ENCODE measurements at regions of chr5 and their contacts with region 1.

Region 1: DNA sequence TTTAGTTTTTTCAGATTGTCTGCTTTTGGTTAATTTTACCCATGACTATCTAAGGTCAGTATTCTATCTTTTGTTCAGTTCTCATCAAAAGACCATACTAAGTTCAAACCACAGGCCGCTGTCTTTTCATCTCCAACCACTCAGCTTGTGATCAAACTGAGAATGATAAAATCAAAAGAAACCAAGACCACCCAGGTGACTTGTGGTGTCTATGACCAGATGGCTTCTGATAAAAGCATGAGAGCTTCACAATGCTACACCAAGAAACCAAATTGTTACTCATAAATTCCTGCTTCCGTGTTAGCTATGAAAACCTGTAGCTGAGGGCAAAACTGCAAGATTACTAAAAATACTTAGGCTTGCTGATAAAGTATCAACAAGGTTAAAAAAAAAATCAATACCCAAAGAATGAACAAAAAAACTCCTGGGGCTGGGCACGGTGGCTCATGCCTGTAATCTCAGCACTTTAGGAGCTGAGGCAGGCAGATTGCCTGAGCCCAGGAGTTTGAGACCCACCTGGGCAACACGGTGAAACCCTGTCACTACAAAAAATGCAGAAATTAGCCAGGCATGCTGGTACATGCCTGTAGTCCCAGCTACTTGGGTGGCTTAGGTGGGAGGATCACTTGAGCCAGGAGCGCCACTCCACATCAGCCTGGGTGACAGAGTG is 25.8 kb upstream of the GPX8 start:
- DNase-seq: peak; percentile 41
- ATAC-seq: peak; percentile 92
- H3K4me3 Mint-ChIP-seq: peak overlapping the region; percentile 66
- H3K27ac Mint-ChIP-seq: peak overlapping the region; percentile 84
- H3K4me1 Mint-ChIP-seq: peaks cover 37% of the 10 kb centered on the region
- H3K27me3 Mint-ChIP-seq: peaks cover 8% of the 10 kb centered on the region

Region 2: DNA sequence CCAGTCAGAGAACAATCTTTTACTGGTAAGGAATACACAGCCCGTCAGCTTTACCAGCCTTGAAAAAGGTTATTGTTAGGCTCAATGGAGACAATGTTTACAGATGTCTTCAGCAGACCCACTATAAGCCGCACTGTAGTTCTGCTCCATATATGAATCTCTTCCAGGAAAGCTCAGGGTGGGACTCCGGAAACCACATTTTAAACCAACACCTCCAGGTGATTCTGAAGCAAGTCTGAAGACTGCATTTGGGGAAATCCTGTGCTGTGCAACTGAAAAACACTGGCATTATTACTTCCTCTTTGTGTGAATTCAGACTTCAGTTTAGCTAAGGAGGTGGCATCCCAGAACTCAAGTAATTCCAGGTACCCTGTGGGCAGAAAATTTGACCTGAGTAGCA is 106.6 kb before region 1 on chr5:
- POLR2A ChIA-PET with region 1: no interaction called
- DNase-seq: no peak
- ATAC-seq: peak; percentile 88
- H3K4me3 Mint-ChIP-seq: peak overlapping the region; percentile 68
- H3K27ac Mint-ChIP-seq: peak overlapping the region; percentile 80
- H3K4me1 Mint-ChIP-seq: peaks cover 66% of the 10 kb centered on the region
- H3K27me3 Mint-ChIP-seq: no peaks in the 10 kb centered on the region

Region 3: DNA sequence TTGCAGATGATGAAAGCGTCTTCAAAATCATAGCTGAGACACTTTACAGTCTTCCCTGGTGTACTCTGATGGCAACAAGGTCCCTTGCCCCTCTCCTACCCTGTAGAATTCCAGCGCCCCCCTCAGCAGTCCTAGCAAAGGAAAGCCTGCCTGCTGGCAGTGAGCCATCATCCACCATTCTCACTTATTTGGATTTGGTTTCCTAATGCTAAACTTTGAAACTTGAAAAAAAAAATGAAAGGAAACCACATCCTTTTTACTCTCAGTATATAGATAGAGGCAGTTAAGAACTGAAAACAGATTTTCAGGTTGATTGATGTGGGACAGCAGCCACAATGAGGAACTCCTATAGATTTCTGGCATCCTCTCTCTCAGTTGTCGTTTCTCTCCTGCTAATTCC is 31.8 kb before region 1 on chr5 and contains the start of gene GZMA:
- POLR2A ChIA-PET with region 1: interaction called, 14 read pairs
- DNase-seq: peak; percentile 61
- ATAC-seq: peak; percentile 66
- H3K4me3 Mint-ChIP-seq: peak within 1 kb of the TSS; percentile 80
- H3K27ac Mint-ChIP-seq: peak within 1 kb of the TSS; percentile 92
- H3K4me1 Mint-ChIP-seq: peaks cover 71% of the 10 kb centered on the region
- H3K27me3 Mint-ChIP-seq: no peaks in the 10 kb centered on the region
- total RNA-seq, gene GZMA: 242 to 250 TPM